IMR-90 (cell line): ENCODE measurements at regions of chr18 and their contacts with region 1.

Region 1: DNA sequence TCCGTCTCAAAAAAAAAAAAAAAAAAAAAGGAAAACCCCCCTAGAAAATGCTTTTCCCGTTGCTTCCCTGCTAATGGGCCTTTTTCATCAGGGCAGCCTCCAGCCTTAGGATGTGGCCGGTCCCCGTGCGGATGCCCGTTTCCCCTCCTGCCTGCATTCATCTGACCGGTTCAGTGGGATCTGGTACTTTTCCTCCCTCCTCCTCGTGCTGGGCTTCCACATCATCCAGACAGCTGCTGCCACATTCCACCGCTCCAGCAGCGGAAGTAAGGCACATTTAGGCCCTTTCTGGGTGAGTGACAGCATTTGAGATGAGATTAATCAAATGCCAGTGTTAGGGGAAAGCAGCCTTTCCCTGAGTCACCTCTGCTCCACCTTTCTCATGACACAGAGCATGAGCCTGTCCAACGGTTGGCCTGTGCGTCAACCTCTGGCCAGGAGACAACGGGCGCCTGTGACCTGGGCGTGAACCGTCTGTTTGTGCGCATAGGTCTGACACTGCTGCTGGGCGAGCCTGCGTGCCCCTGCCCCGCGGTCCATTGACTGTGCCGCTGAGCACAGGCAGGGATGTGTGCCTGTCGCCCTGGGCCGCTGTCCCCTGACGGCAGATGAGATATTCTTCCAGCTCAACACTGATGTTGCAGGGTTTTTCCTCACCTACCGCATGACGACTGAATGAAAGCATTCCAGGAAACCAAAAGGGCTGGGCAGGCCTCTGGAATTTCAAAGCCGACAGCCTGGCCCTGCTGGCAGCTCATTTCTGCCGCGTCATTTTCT is 174.0 kb downstream of the TGIF1 start:
- DNase-seq: peak; percentile 98
- ATAC-seq: peak; percentile 62
- H3K4me3 ChIP-seq: peak overlapping the region; percentile 13; the same call in 1 of the 2 replicates
- H3K27ac ChIP-seq: peak overlapping the region; percentile 96
- H3K4me1 ChIP-seq: peaks cover 25% of the 10 kb centered on the region
- H3K27me3 ChIP-seq: no peaks in the 10 kb centered on the region
- CTCF ChIP-seq: no peak
- POLR2A ChIP-seq: peak; percentile 78
- RAD21 ChIP-seq: peak; percentile 17; the same call in 1 of the 2 replicates

Region 2: GRCh38 chr18:3652380-3653262 is 28.7 kb after region 1 on chr18:
- CTCF ChIA-PET with region 1: no interaction called
- POLR2A ChIA-PET with region 1: interaction called, 9 read pairs
- dilution Hi-C with region 1: no loop called
- in situ Hi-C with region 1: no loop called
- intact Hi-C with region 1: loop called (anchors 1 kb)
- DNase-seq: peak; percentile 99
- ATAC-seq: peak; percentile 82
- H3K4me3 ChIP-seq: no peak overlapping the region
- H3K27ac ChIP-seq: peak overlapping the region; percentile 94
- H3K4me1 ChIP-seq: peaks cover 27% of the 10 kb centered on the region
- H3K27me3 ChIP-seq: no peaks in the 10 kb centered on the region
- CTCF ChIP-seq: peak; percentile 21; the same call in 1 of the 2 replicates
- POLR2A ChIP-seq: peak; percentile 94
- RAD21 ChIP-seq: peak; percentile 29; the same call in 1 of the 2 replicates

Region 3: GRCh38 chr18:3799176-3799914 is 175.4 kb after region 1 on chr18:
- CTCF ChIA-PET with region 1: no interaction called
- POLR2A ChIA-PET with region 1: interaction called, 11 read pairs
- dilution Hi-C with region 1: no loop called
- in situ Hi-C with region 1: no loop called
- intact Hi-C with region 1: no loop called
- DNase-seq: peak; percentile 31
- ATAC-seq: no peak
- H3K4me3 ChIP-seq: no peak overlapping the region
- H3K27ac ChIP-seq: no peak overlapping the region
- H3K4me1 ChIP-seq: peaks cover 2% of the 10 kb centered on the region
- H3K27me3 ChIP-seq: no peaks in the 10 kb centered on the region; the same call in 1 of the 2 replicates
- CTCF ChIP-seq: no peak
- POLR2A ChIP-seq: no peak
- RAD21 ChIP-seq: no peak